ENCODE measurements at regions of chr1 and their contacts with region 1.

Region 1: DNA sequence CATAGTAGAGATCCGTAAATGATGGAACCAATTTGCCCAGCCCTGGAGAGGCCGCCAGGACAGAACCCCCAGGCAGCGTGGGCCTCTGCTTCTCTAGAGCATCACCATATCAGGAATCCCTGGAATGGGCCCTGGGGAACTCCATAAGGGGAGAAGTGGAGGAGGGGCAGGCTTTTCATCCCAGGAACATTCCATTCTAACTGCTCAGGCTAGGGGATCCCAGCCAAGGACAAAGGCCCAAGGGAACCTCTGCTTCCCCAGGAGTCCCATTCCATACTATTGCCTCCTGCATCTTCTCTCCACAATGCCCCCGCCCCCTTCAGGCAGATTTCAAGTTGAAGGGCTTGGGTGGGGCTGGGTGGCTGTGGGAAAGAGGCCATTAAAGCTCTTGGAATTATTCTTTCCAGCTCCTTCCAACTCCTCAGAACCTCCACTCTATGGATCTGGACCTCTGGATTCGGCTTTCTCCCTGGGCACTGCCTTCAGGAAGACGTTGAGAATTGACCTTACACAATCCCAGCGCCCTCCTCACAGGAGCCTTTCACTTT is 6.0 kb downstream of the TRNP1 start:
- DNase-seq: peak; percentile 95
- H3K4me3 ChIP-seq: no peak overlapping the region
- H3K27me3 ChIP-seq: no peaks in the 10 kb centered on the region
- CTCF ChIP-seq: 0 out of 2 replicates have a peak, but pooled peaks have one; percentile 19

Region 2: GRCh38 chr1:27033043-27033746 is 33.7 kb after region 1 on chr1:
- CTCF ChIA-PET with region 1: interaction called, 19 read pairs
- POLR2A ChIA-PET with region 1: interaction called, 4 read pairs
- DNase-seq: no peak
- H3K4me3 ChIP-seq: no peak overlapping the region
- H3K27me3 ChIP-seq: no peaks in the 10 kb centered on the region
- CTCF ChIP-seq: no peak

Region 3: GRCh38 chr1:27161594-27161993 is 162.1 kb after region 1 on chr1:
- CTCF ChIA-PET with region 1: no interaction called
- POLR2A ChIA-PET with region 1: no interaction called
- DNase-seq: no peak
- H3K4me3 ChIP-seq: no peak overlapping the region
- H3K27me3 ChIP-seq: no peaks in the 10 kb centered on the region
- CTCF ChIP-seq: no peak

Measured in BJ (cell line).